IMR-90 (cell line): ENCODE measurements at regions of chr2 and their contacts with region 1.

Region 1: DNA sequence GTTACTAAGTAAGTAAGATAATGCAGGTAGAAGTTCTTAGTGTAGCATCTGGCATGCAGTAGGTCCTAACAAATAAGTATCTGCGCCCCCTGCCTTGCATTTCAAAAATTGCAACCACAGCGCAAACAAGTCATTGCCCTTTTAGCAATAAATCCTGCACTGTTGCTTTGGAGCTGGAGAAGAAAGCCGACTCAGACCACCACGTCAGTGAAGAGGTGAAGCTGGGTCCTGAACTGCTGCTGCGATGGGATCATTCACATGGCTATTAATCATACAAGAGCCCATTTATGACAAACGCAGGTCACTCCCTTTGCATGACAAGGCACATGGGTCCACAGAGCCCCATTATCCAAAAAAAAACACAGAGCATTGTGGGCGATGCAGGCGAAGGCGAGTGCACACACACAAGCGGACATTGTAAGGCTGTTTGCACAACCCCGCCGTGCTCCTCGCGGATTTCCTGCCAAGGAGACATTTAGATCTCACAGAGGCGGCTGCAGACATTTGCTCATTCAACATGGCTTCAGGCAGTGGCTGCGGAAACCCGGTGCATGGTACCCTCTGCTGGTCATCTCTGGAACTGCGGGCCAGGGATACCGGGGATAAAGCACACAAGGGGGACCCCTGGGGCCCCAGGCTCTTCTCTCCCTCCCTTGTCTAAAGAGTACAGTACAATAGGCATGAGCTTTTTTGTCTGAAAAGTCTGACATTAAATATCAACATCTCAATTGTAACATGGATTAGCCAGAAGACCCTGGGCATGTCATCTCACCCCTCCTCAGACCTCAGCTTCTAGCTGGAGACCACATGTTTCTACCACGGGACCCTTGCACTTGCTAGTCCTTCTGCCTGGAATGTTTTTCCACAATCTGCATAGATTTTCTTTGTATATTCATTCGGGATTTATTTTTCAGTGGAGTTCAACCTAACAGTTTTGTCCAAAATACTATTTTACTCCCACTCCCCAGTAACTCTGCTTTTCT is 56.7 kb downstream of the CYRIA start:
- DNase-seq: peak; percentile 68
- ATAC-seq: peak; percentile 96
- H3K4me3 ChIP-seq: peak overlapping the region; percentile 20
- H3K27ac ChIP-seq: no peak overlapping the region
- H3K4me1 ChIP-seq: no peaks in the 10 kb centered on the region; the same call in 1 of the 2 replicates
- H3K27me3 ChIP-seq: no peaks in the 10 kb centered on the region
- CTCF ChIP-seq: peak; percentile 92
- POLR2A ChIP-seq: no peak
- RAD21 ChIP-seq: peak; percentile 74

Region 2: DNA sequence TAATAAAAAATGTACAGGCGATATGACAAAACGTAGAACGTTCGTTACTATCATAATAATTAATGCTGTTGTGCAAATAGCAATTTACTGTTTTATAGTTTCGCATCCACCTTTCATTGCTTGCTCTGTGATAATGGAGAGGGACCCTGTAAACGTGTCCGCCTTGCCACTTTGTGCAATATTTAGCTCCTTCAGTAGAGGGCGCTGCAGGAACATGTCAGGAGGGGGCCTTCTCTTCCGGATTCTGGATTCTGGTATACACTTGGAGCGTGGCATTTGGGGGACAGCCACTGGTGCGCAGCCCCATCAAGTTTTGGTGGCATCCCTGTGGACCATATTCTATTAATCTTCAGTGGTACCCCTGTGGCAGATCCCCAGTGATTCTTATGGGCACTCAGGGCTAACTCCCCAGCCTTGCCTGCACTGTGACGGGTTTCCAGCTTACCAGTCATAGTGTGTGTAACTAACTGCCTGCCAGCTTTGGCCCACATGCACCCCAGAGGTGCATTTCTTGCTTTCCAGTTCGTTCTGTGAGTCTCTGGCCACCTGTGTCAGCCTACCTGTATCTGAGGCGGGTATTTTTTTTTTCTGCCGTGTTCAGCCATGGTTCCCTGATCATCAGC is 83.6 kb before region 1 on chr2:
- CTCF ChIA-PET with region 1: no interaction called
- POLR2A ChIA-PET with region 1: no interaction called
- dilution Hi-C with region 1: no loop called
- in situ Hi-C with region 1: no loop called
- intact Hi-C with region 1: loop called (anchors 1 kb)
- DNase-seq: no peak
- ATAC-seq: no peak
- H3K4me3 ChIP-seq: no peak overlapping the region
- H3K27ac ChIP-seq: no peak overlapping the region
- H3K4me1 ChIP-seq: no peaks in the 10 kb centered on the region
- H3K27me3 ChIP-seq: no peaks in the 10 kb centered on the region
- CTCF ChIP-seq: peak; percentile 43
- POLR2A ChIP-seq: no peak
- RAD21 ChIP-seq: peak; percentile 47

Region 3: GRCh38 chr2:16553226-16553625 is 55.7 kb before region 1 on chr2:
- CTCF ChIA-PET with region 1: interaction called, 6 read pairs
- POLR2A ChIA-PET with region 1: no interaction called
- dilution Hi-C with region 1: no loop called
- in situ Hi-C with region 1: no loop called
- intact Hi-C with region 1: loop called (anchors 1 kb)
- DNase-seq: peak; percentile 33
- ATAC-seq: peak; percentile 64
- H3K4me3 ChIP-seq: no peak overlapping the region
- H3K27ac ChIP-seq: no peak overlapping the region
- H3K4me1 ChIP-seq: no peaks in the 10 kb centered on the region; the same call in 1 of the 2 replicates
- H3K27me3 ChIP-seq: no peaks in the 10 kb centered on the region
- CTCF ChIP-seq: peak; percentile 47
- POLR2A ChIP-seq: no peak
- RAD21 ChIP-seq: peak; percentile 32; the same call in 1 of the 2 replicates